Mammary epithelial cell (primary cell): ENCODE measurements at regions of chr6 and their contacts with region 1.

Region 1: DNA sequence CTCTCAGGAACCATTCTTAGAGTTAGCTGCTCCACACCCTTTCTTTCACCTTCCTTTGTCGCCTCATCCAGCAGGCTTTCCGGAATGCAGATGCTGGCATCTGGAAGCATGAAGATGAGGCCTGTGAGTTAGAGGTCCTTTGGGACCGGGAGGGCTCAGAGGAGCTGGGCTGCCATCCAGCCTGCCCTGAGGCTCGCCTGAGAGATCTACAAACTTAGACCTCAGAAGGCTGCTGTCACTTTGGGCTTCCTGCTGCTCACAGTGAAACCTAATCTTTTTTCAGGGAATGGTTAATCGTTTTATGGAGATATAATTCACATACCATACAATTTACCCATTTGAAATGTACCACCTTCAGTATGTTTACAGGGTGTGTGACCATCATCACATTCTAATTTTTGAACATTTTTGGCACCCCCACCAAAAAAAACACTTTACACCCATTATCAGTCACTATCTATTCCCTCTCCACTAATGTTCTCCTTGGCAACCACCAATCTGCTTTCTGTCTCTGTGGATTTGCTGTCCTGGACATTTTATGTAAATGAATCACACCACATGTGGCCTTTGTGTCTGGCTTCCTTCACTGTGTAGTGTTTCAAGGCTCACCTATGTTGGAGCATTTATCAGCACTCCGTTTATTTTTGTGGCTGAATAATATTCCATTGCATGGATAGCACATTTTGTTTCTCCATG is 20.0 kb upstream of the MPC1 start:
- DNase-seq: peak; percentile 16
- H3K4me3 ChIP-seq: no peak overlapping the region
- H3K27ac ChIP-seq: no peak overlapping the region
- H3K4me1 ChIP-seq: peaks cover 3% of the 10 kb centered on the region
- H3K27me3 ChIP-seq: no peaks in the 10 kb centered on the region
- CTCF ChIP-seq: no peak

Region 2: DNA sequence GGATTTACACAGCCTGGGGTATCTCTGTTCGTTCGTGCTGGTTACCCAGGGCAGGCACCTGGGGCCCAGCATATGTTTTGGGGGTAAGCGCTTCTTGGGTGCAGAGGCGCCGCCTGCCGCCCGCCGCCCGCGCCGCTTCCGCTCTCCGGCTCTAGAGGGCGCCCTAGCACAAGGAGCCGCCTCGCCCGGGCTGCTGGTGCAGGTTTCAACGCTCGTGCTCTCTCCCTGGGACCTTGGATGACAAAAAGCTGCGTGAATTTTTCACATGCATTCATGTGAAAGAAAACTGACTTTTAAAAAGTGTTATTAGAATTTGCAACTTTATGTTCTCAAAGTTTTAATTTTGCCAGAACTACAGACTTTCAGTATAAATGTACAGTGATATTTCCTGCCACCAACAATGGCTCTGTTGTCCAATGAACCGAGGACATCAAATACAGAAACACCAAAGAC is 127.0 kb before region 1 on chr6:
- CTCF ChIA-PET with region 1: no interaction called
- dilution Hi-C with region 1: no loop called
- in situ Hi-C with region 1: loop called (anchors 5 to 25 kb)
- intact Hi-C with region 1: loop called (anchors 1 kb)
- DNase-seq: peak; percentile 37
- H3K4me3 ChIP-seq: no peak overlapping the region
- H3K27ac ChIP-seq: no peak overlapping the region
- H3K4me1 ChIP-seq: peaks cover 3% of the 10 kb centered on the region
- H3K27me3 ChIP-seq: no peaks in the 10 kb centered on the region
- CTCF ChIP-seq: peak; percentile 69 to 99

Region 3: GRCh38 chr6:166419286-166419685 is 16.6 kb after region 1 on chr6:
- CTCF ChIA-PET with region 1: no interaction called
- dilution Hi-C with region 1: no loop called
- in situ Hi-C with region 1: no loop called
- intact Hi-C with region 1: no loop called
- DNase-seq: peak; percentile 76
- H3K4me3 ChIP-seq: no peak overlapping the region
- H3K27ac ChIP-seq: no peak overlapping the region
- H3K4me1 ChIP-seq: no peaks in the 10 kb centered on the region
- H3K27me3 ChIP-seq: no peaks in the 10 kb centered on the region
- CTCF ChIP-seq: no peak